GM10248 (cell line): ENCODE measurements at regions of chr15 and their contacts with region 1.

Region 1: DNA sequence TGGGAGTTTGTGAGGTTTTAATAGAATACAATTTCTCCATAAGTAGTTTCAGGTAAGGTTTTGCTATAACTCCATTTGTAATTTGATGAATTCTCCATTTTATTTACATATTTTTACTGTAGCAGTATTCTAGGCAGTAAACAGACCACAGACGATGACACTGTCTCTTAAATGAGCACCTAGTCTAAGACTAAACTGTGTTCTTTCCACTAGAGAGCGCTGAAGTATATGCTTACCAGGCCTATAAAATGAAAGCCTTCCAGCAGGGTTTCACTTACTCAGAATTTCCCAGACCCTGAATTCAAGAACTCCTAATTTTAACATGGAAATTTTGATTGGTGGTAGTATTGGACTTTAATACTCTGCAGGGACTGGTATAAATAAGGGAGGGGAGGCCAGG is 41.6 kb downstream of the POLG start:
- DNase-seq: no peak
- CTCF ChIP-seq: no peak

Region 2: GRCh38 chr15:89278307-89278706 is 14.7 kb before region 1 on chr15:
- CTCF ChIA-PET with region 1: interaction called, 29 read pairs
- POLR2A ChIA-PET with region 1: no interaction called
- DNase-seq: no peak
- CTCF ChIP-seq: no peak

Region 3: DNA sequence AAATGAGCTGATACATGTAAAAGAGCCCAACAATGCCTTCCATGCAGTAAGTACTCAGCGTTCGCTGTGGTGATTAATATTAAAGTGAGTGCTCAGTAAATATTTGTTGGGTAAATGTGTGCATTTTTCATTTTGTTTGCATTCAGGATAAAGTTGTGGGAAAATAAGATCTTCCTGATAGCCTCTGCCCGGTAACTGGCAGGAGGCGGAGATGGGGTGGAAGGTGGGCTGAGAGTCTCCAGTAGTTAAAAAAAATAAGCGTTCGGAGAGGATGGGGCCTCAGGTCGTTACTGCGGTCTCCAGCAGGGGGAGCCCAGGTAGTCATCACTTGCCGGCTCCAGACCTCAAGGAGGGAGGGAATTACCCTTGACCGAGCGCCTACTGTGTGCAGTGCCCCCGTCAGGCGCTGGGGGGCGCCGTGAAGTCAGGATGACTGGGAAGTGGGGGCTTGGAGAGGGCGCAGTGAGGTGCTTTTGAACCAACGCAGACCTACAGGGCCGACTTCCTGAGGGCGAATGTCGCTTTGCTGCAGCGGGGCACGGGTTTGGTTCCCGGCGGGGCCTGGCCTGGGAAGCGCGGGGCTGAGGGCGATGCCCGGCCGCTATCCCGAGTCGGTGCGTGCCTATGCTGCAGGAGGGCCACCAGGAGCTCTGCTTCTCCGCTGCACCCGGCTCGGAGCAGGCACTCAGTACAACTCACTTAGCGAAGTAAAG is 123.3 kb after region 1 on chr15:
- CTCF ChIA-PET with region 1: no interaction called
- POLR2A ChIA-PET with region 1: no interaction called
- DNase-seq: peak; percentile 93
- CTCF ChIP-seq: peak; percentile 80